ENCODE measurements at regions of chr5 and their contacts with region 1.

Region 1: GRCh38 chr5:170100066-170100943 is 5.4 kb upstream of the FOXI1 start:
- DNase-seq: peak; percentile 72
- H3K4me3 ChIP-seq: no peak overlapping the region
- H3K27ac ChIP-seq: no peak overlapping the region
- H3K4me1 ChIP-seq: no peaks in the 10 kb centered on the region
- CTCF ChIP-seq: peak; percentile 86

Region 2: DNA sequence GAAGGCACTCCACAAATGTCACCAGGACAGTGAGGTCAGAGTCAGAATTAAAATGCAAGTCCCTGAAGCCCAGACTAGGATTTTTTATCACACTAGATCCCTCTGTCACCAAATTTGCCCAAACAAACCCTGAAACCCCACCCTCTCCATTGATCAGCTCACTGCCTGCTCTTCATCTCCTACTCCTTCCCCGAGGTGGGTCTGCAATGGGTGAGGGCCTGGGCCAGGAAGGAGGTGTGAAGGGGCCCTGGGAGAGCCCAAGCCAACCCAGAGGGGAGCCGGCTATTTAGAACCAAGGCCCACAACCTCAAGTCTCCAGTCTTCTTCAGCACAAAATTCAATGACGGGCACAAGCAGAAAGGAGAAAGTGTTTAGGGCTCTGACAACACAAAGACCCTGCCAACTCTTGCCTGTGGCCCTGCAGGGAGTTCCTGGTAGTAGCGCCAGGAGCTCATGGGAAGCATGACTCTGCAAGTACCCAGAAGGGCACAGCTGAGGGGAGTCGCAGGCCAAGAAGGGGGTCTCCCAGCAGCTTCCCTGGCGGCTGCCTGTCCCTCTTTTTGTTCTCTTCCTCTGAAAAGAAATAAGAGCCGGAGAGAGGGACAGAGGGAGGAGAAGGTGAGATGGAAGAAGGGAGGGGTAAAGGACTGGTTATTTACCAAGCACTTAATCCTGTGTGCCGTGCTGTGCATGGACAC is 10.9 kb after region 1 on chr5:
- CTCF ChIA-PET with region 1: no interaction called
- POLR2A ChIA-PET with region 1: no interaction called
- intact Hi-C with region 1: no loop called
- DNase-seq: no peak
- H3K4me3 ChIP-seq: no peak overlapping the region
- H3K27ac ChIP-seq: no peak overlapping the region
- H3K4me1 ChIP-seq: no peaks in the 10 kb centered on the region
- CTCF ChIP-seq: no peak

Region 3: GRCh38 chr5:170183816-170184687 is 83.7 kb after region 1 on chr5:
- CTCF ChIA-PET with region 1: no interaction called
- POLR2A ChIA-PET with region 1: no interaction called
- intact Hi-C with region 1: loop called (anchors 1 kb)
- DNase-seq: peak; percentile 57
- H3K4me3 ChIP-seq: no peak overlapping the region
- H3K27ac ChIP-seq: no peak overlapping the region
- H3K4me1 ChIP-seq: no peaks in the 10 kb centered on the region
- CTCF ChIP-seq: peak; percentile 92

Region 4: GRCh38 chr5:170216266-170216864 is 116.1 kb after region 1 on chr5:
- CTCF ChIA-PET with region 1: no interaction called
- POLR2A ChIA-PET with region 1: no interaction called
- intact Hi-C with region 1: no loop called
- DNase-seq: peak; percentile 11
- H3K4me3 ChIP-seq: no peak overlapping the region
- H3K27ac ChIP-seq: no peak overlapping the region
- H3K4me1 ChIP-seq: no peaks in the 10 kb centered on the region
- CTCF ChIP-seq: peak; percentile 65

Region 5: GRCh38 chr5:170393235-170393634 is 292.9 kb after region 1 on chr5:
- CTCF ChIA-PET with region 1: no interaction called
- POLR2A ChIA-PET with region 1: no interaction called
- intact Hi-C with region 1: no loop called
- DNase-seq: no peak
- H3K4me3 ChIP-seq: no peak overlapping the region
- H3K27ac ChIP-seq: no peak overlapping the region
- H3K4me1 ChIP-seq: no peaks in the 10 kb centered on the region
- CTCF ChIP-seq: no peak

Measured in OCI-LY7 (cell line).